Activated CD8-positive, alpha-beta T cell treated with anti-CD3 and anti-CD28 coated beads, Interleukin-2, amount 10 ng/mL, durations not matched to agents 7 days and 5 days (primary cell): ENCODE measurements at regions of chr6 and their contacts with region 1.

Region 1: GRCh38 chr6:32785781-32786533 is 22.6 kb upstream of the HLA-DQB2 start:
- DNase-seq: peak; percentile 54
- ATAC-seq: peak; percentile 93
- H3K4me3 Mint-ChIP-seq: no peak overlapping the region
- H3K27ac Mint-ChIP-seq: no peak overlapping the region
- H3K4me1 Mint-ChIP-seq: no peaks in the 10 kb centered on the region
- H3K27me3 Mint-ChIP-seq: peaks cover 52% of the 10 kb centered on the region

Region 2: GRCh38 chr6:32432050-32432450 is 353.9 kb before region 1 on chr6:
- CTCF ChIA-PET with region 1: interaction called, 21 read pairs
- POLR2A ChIA-PET with region 1: no interaction called
- DNase-seq: no peak
- ATAC-seq: no peak
- H3K4me3 Mint-ChIP-seq: no peak overlapping the region
- H3K27ac Mint-ChIP-seq: no peak overlapping the region
- H3K4me1 Mint-ChIP-seq: no peaks in the 10 kb centered on the region
- H3K27me3 Mint-ChIP-seq: peaks cover 27% of the 10 kb centered on the region

Region 3: DNA sequence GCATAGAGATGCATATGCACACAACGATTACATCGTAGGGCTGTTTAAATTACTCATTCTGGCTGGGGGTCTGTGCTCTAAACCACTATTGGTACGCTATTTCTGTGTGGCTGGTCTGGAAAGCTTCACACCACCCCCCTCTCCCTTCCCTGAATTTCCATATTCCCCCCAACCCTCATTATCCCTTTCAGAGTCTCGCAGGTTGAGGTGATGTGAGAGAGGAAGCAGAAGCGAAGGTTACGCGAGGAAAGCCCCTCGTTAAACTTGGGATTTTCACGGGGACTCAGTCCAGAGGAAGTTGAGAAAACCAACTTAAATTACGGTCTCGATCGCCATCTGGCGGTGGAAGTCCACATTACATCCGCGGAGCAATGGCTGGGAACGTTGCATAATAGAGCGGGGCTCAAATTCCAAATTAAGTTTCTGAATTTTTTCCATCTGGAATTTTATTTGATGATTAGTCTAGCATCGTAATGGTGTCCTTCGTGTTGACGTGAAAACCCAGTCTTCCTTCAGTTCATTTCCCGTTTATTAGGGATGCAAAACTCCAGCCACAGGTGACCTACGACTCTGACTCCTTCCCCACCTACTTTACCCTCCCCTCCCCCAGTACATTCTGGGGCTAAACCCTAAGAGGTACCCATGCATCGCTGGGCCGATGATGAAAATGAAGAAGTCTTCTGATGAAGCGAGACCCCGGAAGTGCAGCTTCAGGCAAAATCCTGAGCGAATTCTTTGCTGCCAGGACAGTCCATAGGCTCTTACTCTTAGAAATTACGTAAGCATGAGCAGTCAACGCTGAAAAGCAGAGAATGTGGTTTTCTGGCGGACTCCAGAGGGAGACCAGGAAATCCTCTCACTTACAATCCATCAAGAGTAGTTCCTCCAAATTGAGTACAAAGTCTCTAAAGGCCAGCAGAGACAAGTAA is 11.2 kb after region 1 on chr6:
- CTCF ChIA-PET with region 1: interaction called, 29 read pairs
- POLR2A ChIA-PET with region 1: no interaction called
- DNase-seq: peak; percentile 83
- ATAC-seq: peak; percentile 73
- H3K4me3 Mint-ChIP-seq: peak overlapping the region; percentile 57
- H3K27ac Mint-ChIP-seq: peak overlapping the region; percentile 33
- H3K4me1 Mint-ChIP-seq: peaks cover 37% of the 10 kb centered on the region
- H3K27me3 Mint-ChIP-seq: peaks cover 40% of the 10 kb centered on the region